RWPE1 (cell line): ENCODE measurements at regions of chr2 and their contacts with region 1.

Region 1: DNA sequence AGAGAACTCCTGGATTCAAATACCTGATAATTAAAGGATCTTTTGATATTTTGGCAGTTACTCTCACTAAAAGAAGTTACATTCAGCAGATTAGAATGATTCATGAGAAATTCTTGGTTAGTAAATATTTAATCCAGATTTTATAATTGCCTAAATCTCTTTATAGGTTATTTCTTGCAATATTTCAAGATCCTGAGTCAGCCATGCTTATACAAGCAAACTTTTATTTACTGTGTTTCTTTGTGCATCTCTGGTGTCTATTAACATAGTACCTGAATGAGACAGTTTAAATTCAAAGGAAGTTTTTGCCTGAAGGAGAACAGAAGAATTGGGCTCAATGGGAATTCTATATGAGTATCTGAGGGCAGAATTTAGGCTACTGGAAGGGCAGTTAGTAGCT is 249.3 kb downstream of the ERBB4 start:
- DNase-seq: no peak
- H3K27ac ChIP-seq: no peak overlapping the region
- CTCF ChIP-seq: no peak

Region 2: GRCh38 chr2:212274215-212274614 is 15.1 kb before region 1 on chr2:
- CTCF ChIA-PET with region 1: no interaction called
- POLR2A ChIA-PET with region 1: no interaction called
- DNase-seq: no peak
- H3K27ac ChIP-seq: no peak overlapping the region
- CTCF ChIP-seq: no peak

Region 3: DNA sequence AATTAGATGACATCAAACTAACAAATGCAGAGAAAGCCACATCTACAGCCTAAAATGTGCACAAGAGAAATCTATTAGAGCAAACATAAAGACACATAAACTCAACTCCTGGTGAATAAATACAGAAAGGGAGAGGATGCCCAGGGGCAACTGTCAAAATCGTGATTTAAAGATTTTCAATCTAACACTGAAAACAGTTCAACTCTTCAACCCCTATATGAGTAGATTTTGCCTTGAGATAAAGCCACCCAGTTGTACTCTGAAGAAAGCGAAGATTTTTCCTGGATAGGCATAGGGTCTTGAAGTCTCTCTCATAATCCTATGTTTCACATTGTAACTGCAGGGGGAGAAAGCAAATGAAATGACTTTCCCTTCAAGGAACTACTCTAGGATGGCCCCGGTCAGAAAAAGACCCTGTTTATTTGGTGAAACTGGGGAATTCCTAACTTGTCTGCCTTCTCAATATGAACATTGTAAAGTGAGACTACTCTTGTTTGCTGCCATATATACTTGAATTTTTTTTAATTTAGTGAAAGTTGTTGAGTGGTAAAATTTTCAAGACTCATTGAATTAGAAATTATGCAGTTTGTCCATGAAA is 22.6 kb after region 1 on chr2:
- CTCF ChIA-PET with region 1: interaction called, 10 read pairs
- POLR2A ChIA-PET with region 1: no interaction called
- DNase-seq: no peak
- H3K27ac ChIP-seq: no peak overlapping the region
- CTCF ChIP-seq: no peak